ENCODE measurements at regions of chr3 and their contacts with region 1.

Region 1: GRCh38 chr3:3179407-3180094 is at the start of gene CRBN:
- DNase-seq: peak; percentile 78 to 95 (median 86)
- ATAC-seq: peak; percentile 96
- H3K4me3 ChIP-seq: peak within 1 kb of the TSS; percentile 97
- H3K4me3 Mint-ChIP-seq: peak within 1 kb of the TSS; percentile 92
- H3K27ac ChIP-seq: peak within 1 kb of the TSS; percentile 69 to 94
- H3K27ac Mint-ChIP-seq: peak within 1 kb of the TSS; percentile 92
- H3K4me1 ChIP-seq: peaks cover 31% of the 10 kb centered on the region
- H3K4me1 Mint-ChIP-seq: peaks cover 45% of the 10 kb centered on the region
- H3K27me3 ChIP-seq: no peaks in the 10 kb centered on the region
- H3K27me3 Mint-ChIP-seq: no peaks in the 10 kb centered on the region
- CTCF ChIP-seq: peak; percentile 99
- total RNA-seq, gene CRBN: 144 to 148 TPM

Region 2: GRCh38 chr3:2765002-2765579 is 414.5 kb before region 1 on chr3:
- CTCF ChIA-PET with region 1: no interaction called
- POLR2A ChIA-PET with region 1: no interaction called
- intact Hi-C with region 1: loop called (anchors 10 kb)
- DNase-seq: peak in 3 of 14 experiments; percentile 27 to 38 (median 31)
- ATAC-seq: peak; percentile 17
- H3K4me3 ChIP-seq: no peak overlapping the region
- H3K4me3 Mint-ChIP-seq: no peak overlapping the region
- H3K27ac ChIP-seq: no peak overlapping the region
- H3K27ac Mint-ChIP-seq: no peak overlapping the region
- H3K4me1 ChIP-seq: no peaks in the 10 kb centered on the region
- H3K4me1 Mint-ChIP-seq: no peaks in the 10 kb centered on the region
- H3K27me3 ChIP-seq: no peaks in the 10 kb centered on the region
- H3K27me3 Mint-ChIP-seq: peaks cover 9% of the 10 kb centered on the region
- CTCF ChIP-seq: no peak

Region 3: GRCh38 chr3:3005146-3005744 is 174.3 kb before region 1 on chr3:
- CTCF ChIA-PET with region 1: no interaction called
- POLR2A ChIA-PET with region 1: no interaction called
- intact Hi-C with region 1: no loop called
- DNase-seq: no peak
- ATAC-seq: no peak
- H3K4me3 ChIP-seq: no peak overlapping the region
- H3K4me3 Mint-ChIP-seq: no peak overlapping the region
- H3K27ac ChIP-seq: no peak overlapping the region
- H3K27ac Mint-ChIP-seq: no peak overlapping the region
- H3K4me1 ChIP-seq: no peaks in the 10 kb centered on the region
- H3K4me1 Mint-ChIP-seq: no peaks in the 10 kb centered on the region
- H3K27me3 ChIP-seq: no peaks in the 10 kb centered on the region
- H3K27me3 Mint-ChIP-seq: peaks cover 10% of the 10 kb centered on the region
- CTCF ChIP-seq: no peak

Region 4: DNA sequence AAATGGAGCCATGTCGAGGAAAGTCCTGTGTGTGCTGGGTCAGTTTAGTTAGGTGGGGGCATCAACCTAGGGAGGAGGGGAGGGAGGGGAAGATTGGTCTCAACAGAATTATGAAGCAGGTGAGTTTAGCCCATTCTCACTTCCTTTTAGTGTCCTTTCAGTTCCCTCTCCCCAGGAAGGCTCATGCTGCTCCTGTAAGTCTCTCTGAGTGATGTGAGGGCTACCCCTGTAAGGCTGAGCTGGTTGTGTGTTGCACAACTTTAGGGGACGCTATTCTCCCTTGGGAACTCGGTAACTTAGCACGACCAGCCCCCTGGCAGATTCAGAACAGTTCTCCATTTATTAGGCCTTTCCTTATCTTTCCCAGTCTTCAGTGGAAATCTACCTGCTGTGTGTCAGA is 90.5 kb before region 1 on chr3:
- CTCF ChIA-PET with region 1: no interaction called
- POLR2A ChIA-PET with region 1: no interaction called
- intact Hi-C with region 1: no loop called
- DNase-seq: no peak
- ATAC-seq: no peak
- H3K4me3 ChIP-seq: no peak overlapping the region
- H3K4me3 Mint-ChIP-seq: no peak overlapping the region
- H3K27ac ChIP-seq: no peak overlapping the region
- H3K27ac Mint-ChIP-seq: no peak overlapping the region
- H3K4me1 ChIP-seq: no peaks in the 10 kb centered on the region
- H3K4me1 Mint-ChIP-seq: no peaks in the 10 kb centered on the region
- H3K27me3 ChIP-seq: no peaks in the 10 kb centered on the region
- H3K27me3 Mint-ChIP-seq: no peaks in the 10 kb centered on the region
- CTCF ChIP-seq: no peak

Region 5: GRCh38 chr3:3126477-3127431 is 52.8 kb before region 1 on chr3 and contains the start of gene TRNT1:
- CTCF ChIA-PET with region 1: no interaction called
- POLR2A ChIA-PET with region 1: interaction called, 7 read pairs
- intact Hi-C with region 1: loop called in 1 of 2 experiments (anchors 2 kb)
- DNase-seq: peak; percentile 93 to 99 (median 96)
- ATAC-seq: peak; percentile 94
- H3K4me3 ChIP-seq: peak within 1 kb of the TSS; percentile 94
- H3K4me3 Mint-ChIP-seq: peak within 1 kb of the TSS; percentile 91
- H3K27ac ChIP-seq: peak within 1 kb of the TSS; percentile 92 to 98
- H3K27ac Mint-ChIP-seq: peak within 1 kb of the TSS; percentile 96
- H3K4me1 ChIP-seq: peaks cover 35% of the 10 kb centered on the region
- H3K4me1 Mint-ChIP-seq: peaks cover 47% of the 10 kb centered on the region
- H3K27me3 ChIP-seq: no peaks in the 10 kb centered on the region
- H3K27me3 Mint-ChIP-seq: no peaks in the 10 kb centered on the region
- CTCF ChIP-seq: no peak
- total RNA-seq, gene TRNT1: 25.8 to 30.7 TPM

Region 6: GRCh38 chr3:3191675-3192285 is 12.2 kb after region 1 on chr3:
- CTCF ChIA-PET with region 1: no interaction called
- POLR2A ChIA-PET with region 1: interaction called, 11 read pairs
- intact Hi-C with region 1: no loop called
- DNase-seq: peak in 4 of 14 experiments; percentile 49 to 65 (median 58)
- ATAC-seq: peak; percentile 79
- H3K4me3 ChIP-seq: peak overlapping the region; percentile 32
- H3K4me3 Mint-ChIP-seq: peak overlapping the region; percentile 71
- H3K27ac ChIP-seq: peak overlapping the region; percentile 53 to 55
- H3K27ac Mint-ChIP-seq: peak overlapping the region; percentile 93
- H3K4me1 ChIP-seq: peaks cover 35% of the 10 kb centered on the region
- H3K4me1 Mint-ChIP-seq: peaks cover 57% of the 10 kb centered on the region
- H3K27me3 ChIP-seq: no peaks in the 10 kb centered on the region
- H3K27me3 Mint-ChIP-seq: no peaks in the 10 kb centered on the region
- CTCF ChIP-seq: no peak

Region 7: DNA sequence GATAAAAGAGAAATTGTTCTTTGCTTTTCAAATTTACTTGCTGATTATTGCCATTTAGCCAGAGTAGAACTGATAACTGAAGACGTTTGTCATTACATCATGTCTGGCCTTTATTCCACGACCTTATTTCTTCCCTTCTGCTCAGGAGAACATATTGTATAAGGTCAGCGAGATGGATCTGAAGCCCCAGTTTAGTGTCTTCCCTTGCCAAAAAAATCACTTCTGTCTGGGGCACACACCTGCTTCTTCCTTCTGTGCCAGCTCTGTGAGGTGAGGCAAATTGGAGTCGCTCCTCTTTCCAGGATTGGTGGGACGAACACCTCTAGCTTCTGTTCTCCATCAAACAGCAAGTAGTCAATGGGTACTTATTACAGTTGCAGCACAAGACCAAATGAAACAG is 250.3 kb after region 1 on chr3:
- CTCF ChIA-PET with region 1: no interaction called
- POLR2A ChIA-PET with region 1: no interaction called
- intact Hi-C with region 1: no loop called
- DNase-seq: no peak
- ATAC-seq: no peak
- H3K4me3 ChIP-seq: no peak overlapping the region
- H3K4me3 Mint-ChIP-seq: no peak overlapping the region
- H3K27ac ChIP-seq: no peak overlapping the region
- H3K27ac Mint-ChIP-seq: no peak overlapping the region
- H3K4me1 ChIP-seq: no peaks in the 10 kb centered on the region
- H3K4me1 Mint-ChIP-seq: no peaks in the 10 kb centered on the region
- H3K27me3 ChIP-seq: no peaks in the 10 kb centered on the region
- H3K27me3 Mint-ChIP-seq: no peaks in the 10 kb centered on the region
- CTCF ChIP-seq: no peak

Measured in CD4-positive, alpha-beta T cell (primary cell).